ENCODE measurements at regions of chr2 and their contacts with region 1.

Region 1: GRCh38 chr2:113707106-113707505 is 49.3 kb downstream of the SLC35F5 start:
- DNase-seq: no peak

Region 2: DNA sequence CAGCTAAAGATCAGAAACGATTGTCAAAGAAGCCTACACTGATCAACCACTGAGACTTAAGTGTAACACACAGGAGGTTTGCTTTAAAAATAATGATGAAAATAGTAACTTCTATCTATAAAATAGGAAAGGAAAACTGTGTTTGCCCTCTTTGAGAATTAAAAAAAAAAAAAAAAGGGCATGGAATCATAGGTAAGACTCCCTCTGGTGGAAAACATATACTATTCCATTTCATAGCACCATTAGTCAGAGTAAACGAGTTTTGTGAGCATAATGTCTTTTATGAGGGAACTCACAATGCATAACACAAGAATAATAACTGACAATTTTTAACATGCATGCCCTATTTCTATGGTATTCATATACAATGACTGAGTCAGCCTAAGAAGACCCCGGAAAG is 13.1 kb after region 1 on chr2:
- CTCF ChIA-PET with region 1: interaction called, 10 read pairs
- POLR2A ChIA-PET with region 1: no interaction called
- DNase-seq: peak; percentile 21